Natural killer cell (primary cell): ENCODE measurements at regions of chr5 and their contacts with region 1.

Region 1: DNA sequence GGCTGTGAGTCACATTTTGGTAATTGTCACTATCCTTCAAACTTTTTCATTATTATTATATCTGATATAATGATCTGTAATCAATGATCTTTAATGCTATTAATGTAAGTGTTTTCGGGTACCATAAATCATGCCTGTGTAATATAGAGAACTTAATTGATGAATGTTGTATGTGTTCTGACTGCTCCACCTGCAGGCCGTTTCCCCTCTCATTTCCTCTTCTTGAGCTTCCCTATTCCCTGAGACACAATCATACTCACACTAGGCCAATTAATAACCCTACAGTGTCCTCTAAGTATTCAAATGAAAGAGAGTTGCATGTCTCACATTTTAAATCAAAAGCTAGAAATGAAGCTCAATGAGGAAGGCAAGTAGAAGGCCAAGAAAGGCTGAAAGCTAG is 420.9 kb upstream of the SGCD start:
- DNase-seq: peak in 1 of 2 donors; percentile 44
- ATAC-seq: no peak
- H3K4me3 ChIP-seq: no peak overlapping the region
- H3K4me3 Mint-ChIP-seq: no peak overlapping the region
- H3K27ac ChIP-seq: no peak overlapping the region
- H3K27ac Mint-ChIP-seq: no peak overlapping the region
- H3K4me1 ChIP-seq: no peaks in the 10 kb centered on the region
- H3K4me1 Mint-ChIP-seq: no peaks in the 10 kb centered on the region
- H3K27me3 ChIP-seq: no peaks in the 10 kb centered on the region
- H3K27me3 Mint-ChIP-seq: no peaks in the 10 kb centered on the region
- CTCF ChIP-seq: peak; percentile 42

Region 2: DNA sequence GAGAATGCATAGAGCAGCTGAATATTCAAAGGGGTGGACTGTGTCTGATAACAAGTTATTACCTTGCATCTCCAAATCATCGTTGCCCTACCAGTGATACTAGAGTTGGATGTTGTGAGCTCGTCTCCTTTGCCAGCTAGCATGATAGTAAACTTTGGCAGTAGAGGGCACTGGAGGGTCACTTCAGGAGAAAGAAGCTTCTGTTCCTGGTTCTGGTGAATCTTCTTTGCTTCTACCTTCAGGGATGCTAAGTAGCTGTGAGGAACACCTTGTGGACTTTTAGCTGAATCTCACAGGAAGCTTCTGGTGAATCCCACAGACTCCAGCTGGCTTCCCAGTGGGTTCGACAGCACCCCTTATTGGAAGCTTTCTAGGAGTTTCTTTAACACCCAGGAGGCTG is 205.7 kb before region 1 on chr5:
- intact Hi-C with region 1: loop called (anchors 1 kb)
- DNase-seq: peak in 1 of 2 donors; percentile 60
- ATAC-seq: peak in 2 of 3 donors; percentile 35 to 49
- H3K4me3 ChIP-seq: no peak overlapping the region
- H3K4me3 Mint-ChIP-seq: no peak overlapping the region
- H3K27ac ChIP-seq: no peak overlapping the region
- H3K27ac Mint-ChIP-seq: no peak overlapping the region
- H3K4me1 ChIP-seq: no peaks in the 10 kb centered on the region
- H3K4me1 Mint-ChIP-seq: no peaks in the 10 kb centered on the region
- H3K27me3 ChIP-seq: no peaks in the 10 kb centered on the region
- H3K27me3 Mint-ChIP-seq: no peaks in the 10 kb centered on the region
- CTCF ChIP-seq: peak; percentile 39

Region 3: GRCh38 chr5:155728857-155729683 is 177.0 kb before region 1 on chr5:
- intact Hi-C with region 1: loop called (anchors 1 kb)
- DNase-seq: peak; percentile 16 to 33
- ATAC-seq: peak in 2 of 3 donors; percentile 57 to 60
- H3K4me3 ChIP-seq: peak overlapping the region; percentile 14
- H3K4me3 Mint-ChIP-seq: peak overlapping the region; percentile 65
- H3K27ac ChIP-seq: no peak overlapping the region
- H3K27ac Mint-ChIP-seq: no peak overlapping the region
- H3K4me1 ChIP-seq: peaks cover 23% of the 10 kb centered on the region
- H3K4me1 Mint-ChIP-seq: peaks cover 0 to 7% of the 10 kb centered on the region in 2 donors
- H3K27me3 ChIP-seq: peaks cover 37% of the 10 kb centered on the region
- H3K27me3 Mint-ChIP-seq: peaks cover 29 to 73% of the 10 kb centered on the region in 2 donors
- CTCF ChIP-seq: no peak